B cell (primary cell): ENCODE measurements at regions of chr15 and their contacts with region 1.

Region 1: GRCh38 chr15:70488002-70488605 is 275.3 kb downstream of the UACA start:
- DNase-seq: peak; percentile 81
- ATAC-seq: no peak
- H3K4me3 ChIP-seq: no peak overlapping the region
- H3K4me3 Mint-ChIP-seq: no peak overlapping the region
- H3K27ac ChIP-seq: no peak overlapping the region
- H3K27ac Mint-ChIP-seq: peak overlapping the region; percentile 52
- H3K4me1 ChIP-seq: peaks cover 44 to 55% of the 10 kb centered on the region in 2 donors
- H3K4me1 Mint-ChIP-seq: peaks cover 53% of the 10 kb centered on the region
- H3K27me3 ChIP-seq: no peaks in the 10 kb centered on the region
- H3K27me3 Mint-ChIP-seq: no peaks in the 10 kb centered on the region
- CTCF ChIP-seq: peak; percentile 92

Region 2: GRCh38 chr15:69475769-69476358 is 1012.2 kb before region 1 on chr15:
- CTCF ChIA-PET with region 1: interaction called, 25 read pairs
- POLR2A ChIA-PET with region 1: no interaction called
- intact Hi-C with region 1: loop called (anchors 1 kb)
- DNase-seq: peak; percentile 76
- ATAC-seq: peak; percentile 87
- H3K4me3 ChIP-seq: no peak overlapping the region
- H3K4me3 Mint-ChIP-seq: no peak overlapping the region
- H3K27ac ChIP-seq: no peak overlapping the region
- H3K27ac Mint-ChIP-seq: no peak overlapping the region
- H3K4me1 ChIP-seq: peaks cover 0 to 4% of the 10 kb centered on the region in 2 donors
- H3K4me1 Mint-ChIP-seq: peaks cover 2% of the 10 kb centered on the region
- H3K27me3 ChIP-seq: peaks cover 0 to 20% (median 8%) of the 10 kb centered on the region in 4 experiments
- H3K27me3 Mint-ChIP-seq: peaks cover 19% of the 10 kb centered on the region
- CTCF ChIP-seq: peak; percentile 97

Region 3: DNA sequence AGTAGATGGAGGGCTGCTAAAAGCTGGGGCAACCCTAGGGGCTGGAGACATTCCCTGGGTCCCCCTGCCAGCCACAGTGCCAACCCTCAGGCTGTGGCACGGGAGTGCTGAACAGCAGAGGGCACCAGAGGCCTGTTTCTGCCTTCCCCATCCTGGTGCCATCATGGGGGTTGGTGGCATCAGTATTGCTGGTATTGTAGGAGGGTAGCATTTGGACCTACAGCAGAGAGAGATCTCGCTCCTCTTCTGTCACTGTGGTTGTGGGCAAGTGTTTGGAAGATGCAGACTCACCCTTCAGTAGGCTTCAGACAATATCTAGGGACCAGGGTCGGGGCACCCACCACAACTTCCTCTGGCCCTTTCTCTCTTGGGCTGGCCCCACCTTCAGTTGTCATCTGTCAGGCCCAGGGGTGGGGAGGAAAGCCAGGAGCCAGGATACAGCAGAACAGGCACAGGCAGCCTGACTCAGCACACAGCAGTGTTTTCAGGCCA is 912.0 kb before region 1 on chr15:
- CTCF ChIA-PET with region 1: interaction called, 22 read pairs
- POLR2A ChIA-PET with region 1: no interaction called
- intact Hi-C with region 1: loop called (anchors 1 kb)
- DNase-seq: peak; percentile 74
- ATAC-seq: peak; percentile 83
- H3K4me3 ChIP-seq: no peak overlapping the region
- H3K4me3 Mint-ChIP-seq: no peak overlapping the region
- H3K27ac ChIP-seq: no peak overlapping the region
- H3K27ac Mint-ChIP-seq: no peak overlapping the region
- H3K4me1 ChIP-seq: peaks cover 5 to 8% of the 10 kb centered on the region in 2 donors
- H3K4me1 Mint-ChIP-seq: peaks cover 11% of the 10 kb centered on the region
- H3K27me3 ChIP-seq: peaks cover 0 to 10% (median under 1%) of the 10 kb centered on the region in 4 experiments
- H3K27me3 Mint-ChIP-seq: peaks cover 18% of the 10 kb centered on the region
- CTCF ChIP-seq: peak; percentile 82

Region 4: DNA sequence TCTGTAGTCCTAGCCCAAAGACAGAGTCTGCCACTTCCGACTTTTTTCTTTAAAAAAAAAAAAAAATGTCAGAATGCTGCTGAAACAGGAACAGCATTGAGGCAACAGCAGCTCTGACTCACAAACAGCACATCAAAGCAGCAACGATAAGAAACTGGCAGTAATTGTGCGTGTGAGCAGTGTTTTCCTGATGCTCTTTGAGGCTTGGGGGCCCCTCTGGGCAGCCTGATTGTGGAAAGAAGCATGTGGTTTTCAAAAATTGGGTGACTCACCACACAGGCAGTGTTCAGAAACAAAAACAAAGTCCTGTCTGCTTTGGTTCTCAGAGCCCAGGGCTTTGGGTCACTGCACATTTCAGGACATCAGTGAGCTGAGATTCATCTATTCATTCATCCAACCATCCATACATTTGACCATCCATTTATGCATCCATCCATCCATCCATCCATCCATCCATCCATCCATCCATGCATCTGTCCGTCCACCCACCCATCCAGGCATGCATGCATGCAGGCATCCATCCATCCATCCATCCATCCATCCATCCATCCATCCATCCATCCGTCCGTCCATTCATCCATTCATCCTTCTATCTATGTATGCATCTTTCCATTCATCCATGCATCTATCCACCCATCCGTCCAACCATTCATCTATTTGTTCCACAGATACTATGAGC is 727.1 kb before region 1 on chr15:
- CTCF ChIA-PET with region 1: no interaction called
- POLR2A ChIA-PET with region 1: no interaction called
- intact Hi-C with region 1: loop called (anchors 2 kb)
- DNase-seq: peak; percentile 63
- ATAC-seq: peak; percentile 80
- H3K4me3 ChIP-seq: no peak overlapping the region
- H3K4me3 Mint-ChIP-seq: peak overlapping the region; percentile 76
- H3K27ac ChIP-seq: no peak overlapping the region
- H3K27ac Mint-ChIP-seq: peak overlapping the region; percentile 81
- H3K4me1 ChIP-seq: peaks cover 65 to 68% of the 10 kb centered on the region in 2 donors
- H3K4me1 Mint-ChIP-seq: peaks cover 69% of the 10 kb centered on the region
- H3K27me3 ChIP-seq: no peaks in the 10 kb centered on the region
- H3K27me3 Mint-ChIP-seq: peaks cover 3% of the 10 kb centered on the region
- CTCF ChIP-seq: no peak

Region 5: DNA sequence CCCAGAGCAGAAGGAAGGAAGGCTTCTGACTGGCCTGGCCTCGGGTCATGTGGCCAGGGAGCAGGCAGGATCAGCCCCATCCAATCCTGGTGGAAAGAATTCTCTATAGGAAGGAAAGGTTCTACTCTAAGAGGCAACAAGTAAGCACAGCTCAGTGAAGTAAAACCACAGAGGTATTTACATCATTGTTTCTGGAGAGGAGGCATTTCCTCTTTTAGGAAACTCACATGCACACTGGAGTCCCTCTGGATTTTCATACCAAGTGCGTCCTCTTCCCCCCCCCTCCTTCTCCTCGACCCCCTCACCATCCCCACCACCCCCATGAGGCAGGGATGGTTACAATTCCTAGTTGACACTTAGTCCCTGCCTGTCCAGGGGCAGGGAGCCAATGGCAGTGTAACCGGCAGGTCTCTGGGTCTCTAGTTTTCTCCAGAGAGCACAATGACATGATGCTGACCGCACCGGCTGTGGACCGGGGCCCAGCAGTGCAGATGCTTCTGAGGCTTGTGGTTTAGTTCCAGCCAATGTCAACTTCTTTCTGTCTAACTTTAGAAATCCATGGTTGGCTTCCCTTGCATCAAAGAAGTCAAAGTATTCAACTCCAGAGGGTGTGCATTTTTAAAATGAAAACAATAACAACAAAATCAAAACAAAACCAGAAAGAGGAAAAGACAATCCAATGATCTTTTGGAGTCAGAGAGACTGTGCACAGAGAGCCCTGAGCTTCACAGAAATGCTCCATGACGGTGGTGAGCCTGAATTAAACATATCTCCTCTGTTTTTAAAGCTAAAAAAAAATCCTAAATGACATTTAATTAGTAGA is 160.0 kb before region 1 on chr15:
- CTCF ChIA-PET with region 1: no interaction called
- POLR2A ChIA-PET with region 1: no interaction called
- intact Hi-C with region 1: loop called (anchors 10 kb)
- DNase-seq: peak; percentile 77
- ATAC-seq: peak; percentile 90
- H3K4me3 ChIP-seq: no peak overlapping the region
- H3K4me3 Mint-ChIP-seq: peak overlapping the region; percentile 62
- H3K27ac ChIP-seq: peak overlapping the region; percentile 32 to 39
- H3K27ac Mint-ChIP-seq: peak overlapping the region; percentile 74
- H3K4me1 ChIP-seq: peaks cover 22 to 32% of the 10 kb centered on the region in 2 donors
- H3K4me1 Mint-ChIP-seq: peaks cover 33% of the 10 kb centered on the region
- H3K27me3 ChIP-seq: no peaks in the 10 kb centered on the region
- H3K27me3 Mint-ChIP-seq: no peaks in the 10 kb centered on the region
- CTCF ChIP-seq: no peak

Region 6: DNA sequence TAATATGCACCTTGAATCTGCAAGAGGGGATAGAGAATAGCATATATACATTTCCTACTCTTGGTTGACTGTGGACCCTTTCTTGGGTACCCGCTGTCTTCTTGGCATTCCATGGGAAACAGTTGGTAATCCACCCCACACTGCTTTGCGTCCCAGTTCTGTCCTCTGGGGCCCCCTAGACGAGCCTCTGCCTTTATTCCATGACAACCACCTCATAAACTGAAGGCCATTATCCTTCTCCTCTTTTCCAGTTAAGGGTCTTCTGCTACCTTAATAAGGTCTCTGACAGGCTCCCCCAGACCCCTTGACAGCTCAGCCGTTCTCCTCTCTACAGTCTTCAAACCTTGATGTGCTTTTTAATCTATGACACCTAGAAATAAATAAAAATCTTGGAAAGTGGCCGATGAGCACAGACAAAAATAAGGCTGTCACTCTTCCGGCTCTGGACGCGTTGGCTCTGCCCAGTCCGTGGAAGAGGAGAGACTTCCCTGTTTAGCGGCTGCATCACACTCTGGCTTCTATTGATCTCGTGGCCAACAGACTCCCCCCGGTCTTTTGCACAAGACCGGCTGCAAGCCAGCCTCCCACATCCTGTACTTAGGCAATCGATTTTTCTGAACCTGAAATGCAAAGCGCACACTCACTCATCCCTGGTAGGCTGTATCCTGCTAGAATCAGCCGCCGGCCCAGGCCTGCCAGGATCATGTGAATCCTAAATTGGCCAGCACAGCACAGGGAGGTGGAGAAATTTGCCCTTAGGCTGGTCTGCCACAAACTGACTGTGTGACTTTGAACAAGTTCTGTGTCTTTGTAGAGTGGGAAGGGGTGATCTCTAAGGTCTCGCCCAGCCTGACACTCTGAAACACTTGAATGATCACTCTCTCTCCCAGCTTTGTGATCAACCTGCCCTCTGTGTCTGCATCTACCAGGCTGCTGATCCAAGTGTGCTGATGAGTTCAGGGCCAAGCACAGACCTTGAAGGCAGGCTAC is 139.2 kb before region 1 on chr15:
- CTCF ChIA-PET with region 1: no interaction called
- POLR2A ChIA-PET with region 1: no interaction called
- intact Hi-C with region 1: no loop called
- DNase-seq: peak; percentile 28
- ATAC-seq: peak; percentile 17
- H3K4me3 ChIP-seq: no peak overlapping the region
- H3K4me3 Mint-ChIP-seq: peak overlapping the region; percentile 32
- H3K27ac ChIP-seq: no peak overlapping the region
- H3K27ac Mint-ChIP-seq: no peak overlapping the region
- H3K4me1 ChIP-seq: peaks cover 6 to 17% of the 10 kb centered on the region in 2 donors
- H3K4me1 Mint-ChIP-seq: peaks cover 12% of the 10 kb centered on the region
- H3K27me3 ChIP-seq: peaks cover 0 to 6% (median 1%) of the 10 kb centered on the region in 4 experiments
- H3K27me3 Mint-ChIP-seq: no peaks in the 10 kb centered on the region
- CTCF ChIP-seq: no peak

Region 7: DNA sequence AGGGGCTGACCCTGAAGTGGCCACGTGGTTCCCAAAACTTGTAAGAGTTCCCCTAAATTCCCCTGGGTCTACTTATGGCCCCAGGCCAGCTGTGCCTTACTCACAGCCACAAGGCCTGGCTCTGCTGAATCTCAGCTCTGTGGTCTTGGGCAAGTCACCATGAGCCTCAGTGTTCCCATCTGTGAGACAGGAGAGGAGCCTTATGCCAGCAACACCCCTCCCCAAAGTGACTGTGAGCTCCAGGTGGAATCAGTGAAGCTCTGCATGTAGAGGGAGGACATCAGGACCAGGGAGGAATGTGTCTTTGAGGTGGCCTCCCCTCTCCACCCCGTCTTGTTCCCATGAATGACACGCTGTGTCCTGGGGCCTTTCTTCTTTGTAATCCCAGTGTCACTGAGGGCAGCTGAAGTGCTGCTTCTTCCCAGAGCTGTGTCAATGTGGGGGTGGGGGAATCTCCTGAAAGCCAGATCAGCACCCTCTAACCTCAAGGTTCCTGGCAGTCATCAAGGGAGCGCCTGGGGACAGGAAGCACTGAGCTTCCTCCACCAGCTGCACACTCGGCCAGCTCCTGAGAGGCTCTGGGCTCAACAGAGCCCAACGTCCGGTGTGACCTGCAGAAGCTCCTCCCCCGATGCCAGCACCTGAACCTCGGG is 16.3 kb after region 1 on chr15:
- CTCF ChIA-PET with region 1: interaction called, 28 read pairs
- POLR2A ChIA-PET with region 1: no interaction called
- intact Hi-C with region 1: loop called (anchors 2 kb)
- DNase-seq: peak; percentile 62
- ATAC-seq: peak; percentile 73
- H3K4me3 ChIP-seq: peak overlapping the region in 3 of 5 experiments; percentile 15 to 32 (median 22)
- H3K4me3 Mint-ChIP-seq: peak overlapping the region; percentile 72
- H3K27ac ChIP-seq: peak overlapping the region; percentile 26 to 64
- H3K27ac Mint-ChIP-seq: peak overlapping the region; percentile 86
- H3K4me1 ChIP-seq: peaks cover 50 to 68% of the 10 kb centered on the region in 2 donors
- H3K4me1 Mint-ChIP-seq: peaks cover 58% of the 10 kb centered on the region
- H3K27me3 ChIP-seq: no peaks in the 10 kb centered on the region
- H3K27me3 Mint-ChIP-seq: no peaks in the 10 kb centered on the region
- CTCF ChIP-seq: no peak